CD4-positive, alpha-beta T cell (primary cell): ENCODE measurements at regions of chr14 and their contacts with region 1.

Region 1: DNA sequence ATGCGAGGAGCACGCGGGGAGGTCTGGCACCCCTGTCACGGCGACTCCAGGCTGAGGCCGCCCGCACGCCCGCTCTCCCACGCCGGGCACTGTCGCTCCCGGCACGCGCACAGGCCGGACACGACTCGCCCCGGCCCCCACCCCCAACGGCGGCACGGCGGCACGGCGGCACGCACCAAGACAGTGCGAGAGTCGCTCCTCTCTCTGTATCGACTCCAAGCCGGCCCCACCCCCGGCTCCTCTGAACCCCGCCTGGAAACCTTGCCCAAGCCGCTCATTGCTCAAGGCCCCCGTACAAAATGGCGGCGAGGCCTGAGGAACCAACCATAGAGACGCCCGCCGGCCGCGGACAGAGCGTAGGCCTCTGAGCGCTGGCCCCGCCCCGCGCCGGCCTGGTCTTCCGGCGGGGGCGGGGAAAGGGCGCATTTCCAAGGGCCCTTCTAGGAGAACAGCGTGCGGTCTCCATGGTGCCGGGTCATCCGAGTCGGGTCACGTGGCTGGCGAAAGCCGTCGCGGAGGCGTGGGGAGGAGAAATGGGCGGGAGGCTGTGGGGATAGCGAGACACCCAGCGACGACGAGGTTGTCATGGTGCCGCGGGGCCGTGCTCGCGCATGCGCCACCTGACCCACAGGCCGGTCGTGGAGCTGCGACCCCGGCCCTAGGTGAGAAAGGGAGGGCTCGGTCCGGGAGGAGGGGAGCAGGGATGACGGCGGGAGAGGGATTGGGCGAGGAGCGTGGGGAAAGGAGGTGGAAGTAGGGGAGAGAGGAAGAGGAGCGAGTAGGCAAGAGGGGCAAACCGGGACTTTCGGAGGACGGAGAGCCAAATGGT is at the start of gene CIPC:
- DNase-seq: peak; percentile 97 to 100 (median 99)
- ATAC-seq: peak; percentile 84
- H3K4me3 ChIP-seq: peak within 1 kb of the TSS; percentile 97
- H3K4me3 Mint-ChIP-seq: peak within 1 kb of the TSS; percentile 98
- H3K27ac ChIP-seq: peak within 1 kb of the TSS; percentile 83 to 95
- H3K27ac Mint-ChIP-seq: peak within 1 kb of the TSS; percentile 94
- H3K4me1 ChIP-seq: peaks cover 27% of the 10 kb centered on the region
- H3K4me1 Mint-ChIP-seq: peaks cover 48% of the 10 kb centered on the region
- H3K27me3 ChIP-seq: no peaks in the 10 kb centered on the region
- H3K27me3 Mint-ChIP-seq: no peaks in the 10 kb centered on the region
- CTCF ChIP-seq: no peak
- total RNA-seq, gene CIPC: 8.2 to 10.7 TPM

Region 2: GRCh38 chr14:75982266-75983018 is 1115.5 kb before region 1 on chr14:
- CTCF ChIA-PET with region 1: no interaction called
- POLR2A ChIA-PET with region 1: no interaction called
- intact Hi-C with region 1: loop called in 1 of 2 experiments (anchors 10 kb)
- DNase-seq: peak; percentile 64 to 89 (median 73)
- ATAC-seq: peak; percentile 69
- H3K4me3 ChIP-seq: peak overlapping the region; percentile 58
- H3K4me3 Mint-ChIP-seq: peak overlapping the region; percentile 93
- H3K27ac ChIP-seq: peak overlapping the region; percentile 40 to 43
- H3K27ac Mint-ChIP-seq: peak overlapping the region; percentile 83
- H3K4me1 ChIP-seq: peaks cover 57% of the 10 kb centered on the region
- H3K4me1 Mint-ChIP-seq: peaks cover 58% of the 10 kb centered on the region
- H3K27me3 ChIP-seq: no peaks in the 10 kb centered on the region
- H3K27me3 Mint-ChIP-seq: no peaks in the 10 kb centered on the region
- CTCF ChIP-seq: peak; percentile 61

Region 3: GRCh38 chr14:76710056-76711010 is 387.6 kb before region 1 on chr14:
- CTCF ChIA-PET with region 1: no interaction called
- POLR2A ChIA-PET with region 1: no interaction called
- intact Hi-C with region 1: loop called (anchors 1 to 2 kb)
- DNase-seq: peak in 7 of 14 experiments; percentile 9 to 71 (median 42)
- ATAC-seq: peak; percentile 55
- H3K4me3 ChIP-seq: no peak overlapping the region
- H3K4me3 Mint-ChIP-seq: no peak overlapping the region
- H3K27ac ChIP-seq: no peak overlapping the region
- H3K27ac Mint-ChIP-seq: no peak overlapping the region
- H3K4me1 ChIP-seq: no peaks in the 10 kb centered on the region
- H3K4me1 Mint-ChIP-seq: no peaks in the 10 kb centered on the region
- H3K27me3 ChIP-seq: peaks cover 0 to 5% of the 10 kb centered on the region in 2 experiments
- H3K27me3 Mint-ChIP-seq: peaks cover 22% of the 10 kb centered on the region
- CTCF ChIP-seq: peak; percentile 89

Region 4: DNA sequence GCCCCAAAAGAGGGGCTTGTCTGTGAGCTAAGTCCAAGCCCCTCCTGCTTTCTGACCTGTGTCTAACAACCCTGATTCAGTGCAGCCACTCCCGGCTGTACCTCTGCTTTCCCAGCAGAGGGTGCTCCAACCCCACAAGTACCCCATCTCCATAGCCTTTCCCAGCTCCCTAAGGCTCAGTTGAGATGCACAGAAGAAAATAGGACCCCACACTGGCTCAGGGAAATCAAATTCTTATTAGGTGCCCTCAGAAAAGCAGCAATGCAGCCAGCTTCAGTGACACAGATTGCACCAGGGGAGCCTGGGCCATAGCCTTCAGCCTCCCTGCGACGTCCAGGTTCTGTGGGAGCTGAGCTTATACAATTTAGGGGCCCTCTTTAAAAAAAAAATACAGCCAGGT is 221.8 kb before region 1 on chr14:
- CTCF ChIA-PET with region 1: interaction called, 19 read pairs
- POLR2A ChIA-PET with region 1: interaction called, 4 read pairs
- intact Hi-C with region 1: loop called (anchors 2 kb)
- DNase-seq: peak in 13 of 14 experiments; percentile 22 to 73 (median 35)
- ATAC-seq: peak; percentile 64
- H3K4me3 ChIP-seq: no peak overlapping the region
- H3K4me3 Mint-ChIP-seq: no peak overlapping the region
- H3K27ac ChIP-seq: no peak overlapping the region
- H3K27ac Mint-ChIP-seq: no peak overlapping the region
- H3K4me1 ChIP-seq: peaks cover 3% of the 10 kb centered on the region
- H3K4me1 Mint-ChIP-seq: peaks cover 4% of the 10 kb centered on the region
- H3K27me3 ChIP-seq: no peaks in the 10 kb centered on the region
- H3K27me3 Mint-ChIP-seq: no peaks in the 10 kb centered on the region
- CTCF ChIP-seq: peak; percentile 87

Region 5: DNA sequence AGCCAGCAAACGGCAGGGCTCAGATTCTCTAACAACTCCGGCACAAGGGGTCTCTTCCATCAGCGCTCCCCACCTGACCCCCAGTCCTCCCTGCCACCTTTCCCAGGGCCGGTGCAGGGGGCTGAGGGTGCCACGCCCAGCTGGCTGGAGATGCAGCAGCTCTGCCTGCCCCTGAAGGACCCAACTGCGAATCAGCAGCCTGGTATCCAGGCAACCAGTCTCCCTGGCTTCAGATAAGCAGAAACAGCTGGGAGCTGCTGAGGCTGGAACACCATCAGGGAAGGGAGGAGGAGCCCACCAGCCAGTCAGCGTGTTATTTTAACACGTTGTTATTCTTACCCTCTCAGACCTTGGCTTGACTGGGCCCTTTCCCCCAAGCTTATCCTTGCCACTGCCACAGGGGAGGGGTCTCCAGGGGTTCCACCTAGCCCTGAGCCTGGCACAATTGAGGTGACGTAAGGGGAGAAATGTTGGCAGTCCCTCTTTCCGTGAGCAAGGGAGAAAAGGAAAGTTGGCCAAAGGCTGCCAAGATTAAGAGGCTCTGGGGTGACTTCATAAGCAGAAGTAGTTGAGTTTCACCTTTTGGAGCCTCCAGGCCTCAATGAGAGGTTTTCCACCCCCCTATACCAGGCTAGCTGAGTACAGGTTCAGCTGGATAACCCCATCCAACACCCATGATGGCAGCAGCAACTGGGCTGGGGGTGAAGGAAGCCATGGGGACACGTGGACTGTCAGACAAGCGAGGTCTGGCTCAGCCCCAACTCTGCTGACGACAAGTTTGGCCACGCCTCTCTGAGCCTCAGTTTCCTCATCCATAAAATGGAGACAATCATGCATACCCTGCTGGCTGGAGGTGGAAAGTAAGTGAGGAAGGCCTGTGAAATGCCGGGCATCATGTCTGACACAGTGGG is 160.5 kb before region 1 on chr14:
- CTCF ChIA-PET with region 1: no interaction called
- POLR2A ChIA-PET with region 1: no interaction called
- intact Hi-C with region 1: no loop called
- DNase-seq: no peak
- ATAC-seq: no peak
- H3K4me3 ChIP-seq: no peak overlapping the region
- H3K4me3 Mint-ChIP-seq: no peak overlapping the region
- H3K27ac ChIP-seq: no peak overlapping the region
- H3K27ac Mint-ChIP-seq: no peak overlapping the region
- H3K4me1 ChIP-seq: peaks cover 10% of the 10 kb centered on the region
- H3K4me1 Mint-ChIP-seq: peaks cover 8% of the 10 kb centered on the region
- H3K27me3 ChIP-seq: no peaks in the 10 kb centered on the region
- H3K27me3 Mint-ChIP-seq: no peaks in the 10 kb centered on the region
- CTCF ChIP-seq: no peak

Region 6: DNA sequence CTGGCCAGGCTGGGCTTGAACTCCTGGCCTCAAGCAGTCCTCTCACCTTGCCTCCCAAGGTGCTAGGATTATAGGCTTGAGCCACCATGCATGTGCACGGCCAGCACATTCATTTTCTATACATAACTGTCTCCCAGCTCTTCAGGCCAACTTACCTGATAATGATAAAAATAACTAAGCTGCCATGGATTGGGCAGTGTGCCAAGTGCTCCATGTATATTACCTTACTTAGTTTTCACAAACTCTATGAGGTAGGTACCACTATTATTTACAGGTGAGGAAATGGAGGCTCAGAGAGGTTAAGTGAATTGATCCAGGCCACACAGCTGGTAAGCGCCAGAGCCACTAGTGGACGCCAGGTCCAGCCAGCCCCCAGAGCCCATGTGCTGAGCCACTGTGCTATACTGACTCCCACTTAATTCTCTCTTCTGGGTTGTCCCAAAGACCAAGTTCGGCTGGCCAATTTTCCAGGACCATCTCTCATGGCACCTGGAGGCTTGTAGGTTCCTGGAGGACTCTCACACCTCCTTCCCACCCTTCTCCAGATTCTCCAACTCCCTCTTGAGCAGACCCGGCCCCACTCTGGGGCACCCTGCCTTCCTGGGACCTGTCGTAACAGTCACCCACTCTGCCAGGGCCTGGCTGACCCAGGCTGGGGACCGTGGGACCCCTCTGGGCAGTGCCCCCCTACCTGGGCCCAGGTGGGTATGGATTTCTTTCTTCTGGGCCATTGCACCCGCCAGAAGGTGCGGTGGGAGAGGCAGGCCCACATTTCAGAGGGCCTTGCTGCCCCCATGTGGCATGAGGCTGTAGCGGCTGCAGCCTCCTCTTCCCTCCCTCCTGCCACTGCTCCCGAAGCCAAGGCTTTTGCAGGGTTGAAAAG is 30.0 kb before region 1 on chr14:
- CTCF ChIA-PET with region 1: interaction called, 10 read pairs
- POLR2A ChIA-PET with region 1: interaction called, 9 read pairs
- intact Hi-C with region 1: loop called in 1 of 2 experiments (anchors 2 kb)
- DNase-seq: peak; percentile 33 to 77 (median 54)
- ATAC-seq: peak; percentile 72
- H3K4me3 ChIP-seq: no peak overlapping the region
- H3K4me3 Mint-ChIP-seq: no peak overlapping the region
- H3K27ac ChIP-seq: no peak overlapping the region
- H3K27ac Mint-ChIP-seq: no peak overlapping the region
- H3K4me1 ChIP-seq: peaks cover 14% of the 10 kb centered on the region
- H3K4me1 Mint-ChIP-seq: no peaks in the 10 kb centered on the region
- H3K27me3 ChIP-seq: no peaks in the 10 kb centered on the region
- H3K27me3 Mint-ChIP-seq: peaks cover 4% of the 10 kb centered on the region
- CTCF ChIP-seq: peak; percentile 76

Region 7: DNA sequence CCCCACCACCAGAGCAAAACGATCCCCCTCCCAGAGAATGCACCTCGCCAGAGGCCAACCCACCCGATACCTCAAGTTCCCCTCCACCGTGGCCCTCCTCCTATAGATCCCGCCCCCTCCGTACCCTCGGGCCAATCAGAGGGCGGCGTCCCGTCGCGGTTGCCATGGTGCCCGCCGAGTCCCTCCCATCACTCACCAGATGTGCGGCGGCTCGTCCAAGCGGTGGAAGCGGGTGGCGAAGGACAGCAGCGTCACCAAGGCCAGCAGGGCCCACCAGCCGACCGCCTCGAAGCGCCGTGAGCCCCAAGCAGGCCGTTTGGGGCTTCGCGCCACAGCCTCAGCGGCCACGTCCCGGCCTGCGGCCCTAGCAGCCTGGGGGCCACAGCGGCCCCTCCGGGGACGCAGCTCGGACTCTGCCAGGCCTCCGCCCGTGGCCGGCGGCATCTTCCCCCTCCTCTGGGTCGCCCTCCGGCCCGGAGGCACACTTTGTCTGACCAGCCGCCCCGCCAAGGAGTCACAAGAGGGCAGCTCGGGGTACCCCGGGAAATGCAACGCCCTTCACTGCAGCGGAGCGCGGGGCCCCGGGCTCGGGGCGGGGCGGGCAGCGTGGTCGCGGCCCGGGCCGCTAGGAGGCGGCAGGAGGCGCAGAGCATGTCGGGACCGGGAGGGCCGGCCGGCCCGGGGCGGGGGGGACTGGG is 222.5 kb after region 1 on chr14 and contains the start of gene POMT2:
- CTCF ChIA-PET with region 1: interaction called, 3 read pairs
- POLR2A ChIA-PET with region 1: interaction called, 7 read pairs
- intact Hi-C with region 1: loop called in 1 of 2 experiments (anchors 1 kb)
- DNase-seq: peak; percentile 86 to 95 (median 90)
- ATAC-seq: peak; percentile 47
- H3K4me3 ChIP-seq: peak within 1 kb of the TSS; percentile 93
- H3K4me3 Mint-ChIP-seq: peak within 1 kb of the TSS; percentile 100
- H3K27ac ChIP-seq: peak within 1 kb of the TSS; percentile 95 to 98
- H3K27ac Mint-ChIP-seq: peak within 1 kb of the TSS; percentile 100
- H3K4me1 ChIP-seq: peaks cover 23% of the 10 kb centered on the region
- H3K4me1 Mint-ChIP-seq: peaks cover 31% of the 10 kb centered on the region
- H3K27me3 ChIP-seq: no peaks in the 10 kb centered on the region
- H3K27me3 Mint-ChIP-seq: no peaks in the 10 kb centered on the region
- CTCF ChIP-seq: peak; percentile 38
- total RNA-seq, gene POMT2: 7.6 to 8.2 TPM

Region 8: GRCh38 chr14:77457522-77458290 is 359.8 kb after region 1 on chr14 and contains the starts of genes AHSA1 and VIPAS39:
- CTCF ChIA-PET with region 1: no interaction called
- POLR2A ChIA-PET with region 1: interaction called, 4 read pairs
- intact Hi-C with region 1: loop called in 1 of 2 experiments (anchors 2 kb)
- DNase-seq: peak; percentile 86 to 99 (median 88)
- ATAC-seq: peak; percentile 94
- H3K4me3 ChIP-seq: peak within 1 kb of the TSS; percentile 98
- H3K4me3 Mint-ChIP-seq: peak within 1 kb of the TSS; percentile 100
- H3K27ac ChIP-seq: peak within 1 kb of the TSS; percentile 79 to 96
- H3K27ac Mint-ChIP-seq: peak within 1 kb of the TSS; percentile 90
- H3K4me1 ChIP-seq: peaks cover 31% of the 10 kb centered on the region
- H3K4me1 Mint-ChIP-seq: peaks cover 48% of the 10 kb centered on the region
- H3K27me3 ChIP-seq: no peaks in the 10 kb centered on the region
- H3K27me3 Mint-ChIP-seq: no peaks in the 10 kb centered on the region
- CTCF ChIP-seq: no peak
- total RNA-seq, gene AHSA1: 28.7 to 33.7 TPM
- total RNA-seq, gene VIPAS39: 7.6 to 8.7 TPM